ENCODE measurements at regions of chr10 and their contacts with region 1.

Region 1: GRCh38 chr10:63629363-63630084 is 108.3 kb downstream of the REEP3 start:
- DNase-seq: peak; percentile 98
- H3K4me3 ChIP-seq: peak overlapping the region; percentile 18 to 58 (median 47)
- H3K27ac ChIP-seq: peak overlapping the region; percentile 98
- H3K4me1 ChIP-seq: peaks cover 34% of the 10 kb centered on the region
- H3K27me3 ChIP-seq: no peaks in the 10 kb centered on the region
- CTCF ChIP-seq: peak; percentile 86 to 92
- POLR2A ChIP-seq: peak; percentile 27

Region 2: DNA sequence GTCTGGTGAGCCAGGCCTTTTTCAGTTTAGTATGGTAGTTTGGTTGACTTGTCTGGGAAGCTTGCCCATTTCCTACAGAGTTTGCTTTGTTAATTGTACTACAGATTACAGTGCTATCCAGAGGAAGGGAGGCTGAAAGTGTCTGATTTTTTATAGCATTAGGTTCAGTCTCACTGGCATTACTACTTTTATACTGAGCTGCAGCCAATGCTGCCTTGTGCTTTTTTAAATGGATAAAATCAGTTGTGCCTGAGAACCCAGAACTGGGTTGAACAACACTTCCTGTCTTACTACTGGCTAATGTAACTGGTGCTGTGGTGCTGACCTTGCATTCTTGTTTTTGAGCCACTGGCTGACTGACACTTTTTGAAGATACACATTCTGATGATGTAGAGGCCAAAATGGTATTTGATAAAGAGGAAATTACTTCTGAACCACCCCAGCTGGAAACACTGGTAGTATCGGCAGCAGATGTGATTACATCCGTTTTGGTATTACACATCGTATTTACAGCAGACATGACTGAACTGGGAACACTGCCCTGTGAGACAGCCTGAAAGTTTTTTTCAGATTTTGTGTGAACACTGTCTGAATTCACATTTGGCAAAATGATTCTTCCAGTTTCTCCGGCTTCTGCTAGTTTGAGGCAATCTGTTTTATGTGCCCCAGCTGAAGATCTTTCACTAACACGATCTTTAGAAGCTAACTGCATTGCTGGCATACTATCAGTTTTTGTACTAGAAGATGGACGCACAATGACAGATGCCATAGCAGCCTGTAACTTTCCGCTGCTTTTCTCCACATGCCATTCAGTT is 422.3 kb before region 1 on chr10:
- CTCF ChIA-PET with region 1: interaction called, 12 read pairs
- POLR2A ChIA-PET with region 1: no interaction called
- dilution Hi-C with region 1: no loop called
- intact Hi-C with region 1: loop called (anchors 1 kb)
- DNase-seq: peak; percentile 96
- H3K4me3 ChIP-seq: no peak overlapping the region
- H3K27ac ChIP-seq: peak overlapping the region; percentile 87
- H3K4me1 ChIP-seq: peaks cover 54% of the 10 kb centered on the region
- H3K27me3 ChIP-seq: no peaks in the 10 kb centered on the region
- CTCF ChIP-seq: no peak
- POLR2A ChIP-seq: no peak

Region 3: GRCh38 chr10:63376560-63377304 is 252.8 kb before region 1 on chr10:
- CTCF ChIA-PET with region 1: no interaction called
- POLR2A ChIA-PET with region 1: no interaction called
- dilution Hi-C with region 1: no loop called
- intact Hi-C with region 1: loop called (anchors 2 kb)
- DNase-seq: peak; percentile 37
- H3K4me3 ChIP-seq: no peak overlapping the region
- H3K27ac ChIP-seq: no peak overlapping the region
- H3K4me1 ChIP-seq: peaks cover 22% of the 10 kb centered on the region
- H3K27me3 ChIP-seq: no peaks in the 10 kb centered on the region
- CTCF ChIP-seq: no peak
- POLR2A ChIP-seq: no peak

Region 4: GRCh38 chr10:63478564-63478963 is 151.0 kb before region 1 on chr10:
- CTCF ChIA-PET with region 1: no interaction called
- POLR2A ChIA-PET with region 1: no interaction called
- dilution Hi-C with region 1: no loop called
- intact Hi-C with region 1: no loop called
- DNase-seq: no peak
- H3K4me3 ChIP-seq: no peak overlapping the region
- H3K27ac ChIP-seq: no peak overlapping the region
- H3K4me1 ChIP-seq: no peaks in the 10 kb centered on the region
- H3K27me3 ChIP-seq: no peaks in the 10 kb centered on the region
- CTCF ChIP-seq: no peak
- POLR2A ChIP-seq: no peak

Region 5: GRCh38 chr10:63521416-63522276 is 107.9 kb before region 1 on chr10:
- CTCF ChIA-PET with region 1: interaction called, 14 read pairs
- POLR2A ChIA-PET with region 1: no interaction called
- dilution Hi-C with region 1: no loop called
- intact Hi-C with region 1: loop called (anchors 1 kb)
- DNase-seq: peak; percentile 80
- H3K4me3 ChIP-seq: peak overlapping the region; percentile 50 to 93 (median 62)
- H3K27ac ChIP-seq: peak overlapping the region; percentile 90
- H3K4me1 ChIP-seq: peaks cover 7% of the 10 kb centered on the region
- H3K27me3 ChIP-seq: no peaks in the 10 kb centered on the region
- CTCF ChIP-seq: no peak
- POLR2A ChIP-seq: peak; percentile 74

Region 6: GRCh38 chr10:63608511-63608910 is 21.0 kb before region 1 on chr10:
- CTCF ChIA-PET with region 1: interaction called, 12 read pairs
- POLR2A ChIA-PET with region 1: no interaction called
- dilution Hi-C with region 1: no loop called
- intact Hi-C with region 1: no loop called
- DNase-seq: no peak
- H3K4me3 ChIP-seq: no peak overlapping the region
- H3K27ac ChIP-seq: no peak overlapping the region
- H3K4me1 ChIP-seq: peaks cover 6% of the 10 kb centered on the region
- H3K27me3 ChIP-seq: no peaks in the 10 kb centered on the region
- CTCF ChIP-seq: no peak
- POLR2A ChIP-seq: no peak

Region 7: DNA sequence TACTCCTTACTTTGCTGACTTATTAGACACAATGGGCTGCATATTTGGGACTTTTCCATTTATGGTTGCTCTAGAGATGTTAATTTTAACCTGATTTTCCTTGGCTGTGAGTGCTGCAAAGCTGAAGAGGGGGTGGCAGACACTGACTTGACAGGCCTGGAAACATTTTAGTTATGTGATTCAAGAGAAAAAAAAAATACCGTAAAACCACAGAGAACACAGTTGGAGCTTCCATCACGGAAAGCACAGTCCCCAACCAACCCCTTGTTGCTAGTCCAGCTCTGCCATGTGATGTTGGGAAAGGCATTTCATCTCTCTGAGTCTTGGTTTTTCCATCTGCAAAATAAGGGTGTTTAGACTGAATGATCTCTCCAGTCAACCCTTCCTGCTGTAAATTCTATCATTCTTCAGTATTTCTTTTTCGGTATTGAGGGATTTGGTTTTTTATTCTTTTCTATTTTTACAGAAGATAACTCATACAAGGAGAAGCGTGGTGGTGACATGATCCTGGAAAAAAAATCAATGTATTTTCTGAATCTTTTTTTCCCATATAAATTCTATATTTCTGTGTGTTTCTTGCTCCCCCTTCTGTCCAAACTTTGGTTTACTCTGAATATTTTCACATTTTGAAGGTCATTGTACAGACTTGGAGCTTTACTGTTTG is 137.7 kb after region 1 on chr10:
- CTCF ChIA-PET with region 1: interaction called, 9 read pairs
- POLR2A ChIA-PET with region 1: no interaction called
- dilution Hi-C with region 1: no loop called
- intact Hi-C with region 1: loop called (anchors 2 kb)
- DNase-seq: peak; percentile 70
- H3K4me3 ChIP-seq: no peak overlapping the region
- H3K27ac ChIP-seq: no peak overlapping the region
- H3K4me1 ChIP-seq: no peaks in the 10 kb centered on the region
- H3K27me3 ChIP-seq: no peaks in the 10 kb centered on the region
- CTCF ChIP-seq: peak in 1 of 2 donors; percentile 33
- POLR2A ChIP-seq: no peak

Measured in endothelial cell of umbilical vein (primary cell).